Right ventricle myocardium inferior (tissue), 1 donor: ENCODE measurements at regions of chr19 and their contacts with region 1.

Region 1: GRCh38 chr19:771332-771785 is 20.4 kb downstream of the MISP start:
- DNase-seq: no peak
- ATAC-seq: no peak

Region 2: GRCh38 chr19:796692-797527 is 25.6 kb after region 1 on chr19 and contains the start of gene PTBP1:
- intact Hi-C with region 1: no loop called
- DNase-seq: peak; percentile 100
- ATAC-seq: peak; percentile 92
- total RNA-seq, gene PTBP1: 67.6 TPM

Region 3: GRCh38 chr19:984165-984967 is 213.0 kb after region 1 on chr19 and contains the start of gene WDR18:
- intact Hi-C with region 1: loop called (anchors 1 kb)
- DNase-seq: peak; percentile 97
- ATAC-seq: peak; percentile 95
- total RNA-seq, gene WDR18: 20.7 TPM